Stomach (tissue), 19 donors: ENCODE measurements at regions of chr13 and their contacts with region 1.

Region 1: GRCh38 chr13:26186118-26186870 is 35.8 kb downstream of the RNF6 start:
- DNase-seq: peak; percentile 93 to 97
- H3K4me3 ChIP-seq: peak overlapping the region; percentile 63 to 85 (median 71)
- H3K27ac ChIP-seq: peak overlapping the region; percentile 78 to 89 (median 87)
- H3K4me1 ChIP-seq: peaks cover 13 to 27% (median 22%) of the 10 kb centered on the region in 4 donors
- H3K27me3 ChIP-seq: no peaks in the 10 kb centered on the region
- CTCF ChIP-seq: peak in 5 of 7 experiments; percentile 27 to 77 (median 32)
- EP300 ChIP-seq: no peak
- POLR2A ChIP-seq: no peak

Region 2: GRCh38 chr13:25717666-25718197 is 468.6 kb before region 1 on chr13:
- intact Hi-C with region 1: no loop called
- DNase-seq: no peak
- H3K4me3 ChIP-seq: no peak overlapping the region
- H3K27ac ChIP-seq: no peak overlapping the region
- H3K4me1 ChIP-seq: no peaks in the 10 kb centered on the region
- H3K27me3 ChIP-seq: no peaks in the 10 kb centered on the region
- CTCF ChIP-seq: no peak
- EP300 ChIP-seq: no peak
- POLR2A ChIP-seq: no peak

Region 3: GRCh38 chr13:26502826-26503225 is 316.5 kb after region 1 on chr13:
- intact Hi-C with region 1: loop called (anchors 5 kb)
- DNase-seq: peak in 1 of 2 donors; percentile 32
- H3K4me3 ChIP-seq: no peak overlapping the region
- H3K27ac ChIP-seq: no peak overlapping the region
- H3K4me1 ChIP-seq: no peaks in the 10 kb centered on the region
- H3K27me3 ChIP-seq: peaks cover 0 to 14% (median 0%) of the 10 kb centered on the region in 3 donors
- CTCF ChIP-seq: no peak
- EP300 ChIP-seq: no peak
- POLR2A ChIP-seq: no peak

Region 4: DNA sequence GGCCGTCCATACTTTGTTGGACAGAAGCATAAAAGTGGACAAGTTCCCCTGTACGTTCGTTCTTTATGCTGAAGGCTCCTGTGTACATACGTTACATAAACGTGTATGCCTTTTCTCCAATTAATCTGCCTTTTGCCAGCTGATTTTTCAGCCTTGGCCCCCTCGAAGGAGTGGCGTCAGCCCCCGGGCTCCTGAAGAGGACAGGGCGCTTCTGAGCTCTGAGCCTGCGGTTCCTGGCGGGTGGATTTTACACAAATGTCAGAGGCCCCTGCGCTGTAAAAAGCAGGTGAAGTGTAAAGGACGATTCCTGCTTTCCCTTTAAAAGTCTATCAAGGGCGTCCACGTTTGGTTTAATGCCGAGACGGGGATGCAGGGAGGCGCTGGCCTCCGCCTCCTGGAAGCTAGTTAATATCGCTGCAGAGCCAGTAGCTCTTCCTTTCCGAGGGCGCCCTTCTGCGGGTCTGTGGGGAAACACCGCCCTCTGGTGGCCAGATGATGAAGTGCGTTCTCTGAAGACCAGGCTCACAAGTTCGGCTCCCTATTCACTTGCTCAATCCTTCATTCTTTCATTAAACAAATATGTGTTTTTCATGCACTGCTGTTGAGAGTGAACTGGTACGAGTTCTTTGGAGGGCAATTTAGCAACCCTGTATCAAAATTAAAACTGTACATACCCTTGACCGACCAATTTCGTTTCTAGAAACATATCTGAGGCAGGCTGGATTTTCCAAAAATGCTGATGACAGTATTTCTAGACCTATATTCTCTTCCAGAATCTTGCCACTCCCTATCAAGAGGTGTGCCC is 512.3 kb after region 1 on chr13:
- intact Hi-C with region 1: loop called (anchors 5 kb)
- DNase-seq: peak; percentile 89 to 95
- H3K4me3 ChIP-seq: peak overlapping the region in 2 of 4 donors; percentile 9 to 17
- H3K27ac ChIP-seq: no peak overlapping the region
- H3K4me1 ChIP-seq: peaks cover 0 to 8% (median 4%) of the 10 kb centered on the region in 4 donors
- H3K27me3 ChIP-seq: peaks cover 0 to 1% (median 0%) of the 10 kb centered on the region in 3 donors
- CTCF ChIP-seq: peak in 6 of 7 experiments; percentile 69 to 97 (median 94)
- EP300 ChIP-seq: no peak
- POLR2A ChIP-seq: no peak